Activated T-helper 1 cell treated with anti-CD3 and anti-CD28 coated beads, Interleukin-12 subunit alpha, Interleukin-12 subunit beta, Interleukin-2, Interleukin-4 antibody, amounts not matched to agents 30 ng/mL and 10 ng/mL and 1 ng/mL, durations not matched to agents 14 hours and 24 hours and 36 hours (primary cell): ENCODE measurements at regions of chr1 and their contacts with region 1.

Region 1: DNA sequence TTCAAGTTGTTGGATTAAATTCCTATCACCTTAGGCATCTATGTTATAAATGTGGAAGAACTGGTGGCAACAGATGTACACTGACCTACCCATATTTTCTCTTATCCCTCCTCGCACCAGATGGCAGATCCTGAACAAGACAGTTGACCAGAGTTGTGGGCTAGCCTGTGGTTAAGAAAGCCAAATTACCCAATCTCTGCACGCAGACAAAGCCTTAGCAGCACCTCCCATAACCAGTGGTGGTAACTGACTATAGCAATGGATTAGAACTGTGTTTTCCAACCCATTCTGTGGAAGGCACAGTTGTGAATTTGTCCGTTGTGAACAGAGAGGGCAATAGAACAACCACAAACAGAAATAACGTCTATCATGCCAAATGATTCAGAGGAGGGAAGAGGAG is 20.6 kb downstream of the ABCB10 start:
- DNase-seq: no peak
- H3K4me3 Mint-ChIP-seq: no peak overlapping the region
- H3K27ac Mint-ChIP-seq: no peak overlapping the region
- H3K4me1 Mint-ChIP-seq: peaks cover 26% of the 10 kb centered on the region
- H3K27me3 Mint-ChIP-seq: peaks cover 2% of the 10 kb centered on the region

Region 2: GRCh38 chr1:229287267-229287666 is 250.6 kb before region 1 on chr1:
- intact Hi-C with region 1: loop called (anchors 1 kb)
- DNase-seq: no peak
- H3K4me3 Mint-ChIP-seq: no peak overlapping the region
- H3K27ac Mint-ChIP-seq: no peak overlapping the region
- H3K4me1 Mint-ChIP-seq: peaks cover 36% of the 10 kb centered on the region
- H3K27me3 Mint-ChIP-seq: no peaks in the 10 kb centered on the region

Region 3: DNA sequence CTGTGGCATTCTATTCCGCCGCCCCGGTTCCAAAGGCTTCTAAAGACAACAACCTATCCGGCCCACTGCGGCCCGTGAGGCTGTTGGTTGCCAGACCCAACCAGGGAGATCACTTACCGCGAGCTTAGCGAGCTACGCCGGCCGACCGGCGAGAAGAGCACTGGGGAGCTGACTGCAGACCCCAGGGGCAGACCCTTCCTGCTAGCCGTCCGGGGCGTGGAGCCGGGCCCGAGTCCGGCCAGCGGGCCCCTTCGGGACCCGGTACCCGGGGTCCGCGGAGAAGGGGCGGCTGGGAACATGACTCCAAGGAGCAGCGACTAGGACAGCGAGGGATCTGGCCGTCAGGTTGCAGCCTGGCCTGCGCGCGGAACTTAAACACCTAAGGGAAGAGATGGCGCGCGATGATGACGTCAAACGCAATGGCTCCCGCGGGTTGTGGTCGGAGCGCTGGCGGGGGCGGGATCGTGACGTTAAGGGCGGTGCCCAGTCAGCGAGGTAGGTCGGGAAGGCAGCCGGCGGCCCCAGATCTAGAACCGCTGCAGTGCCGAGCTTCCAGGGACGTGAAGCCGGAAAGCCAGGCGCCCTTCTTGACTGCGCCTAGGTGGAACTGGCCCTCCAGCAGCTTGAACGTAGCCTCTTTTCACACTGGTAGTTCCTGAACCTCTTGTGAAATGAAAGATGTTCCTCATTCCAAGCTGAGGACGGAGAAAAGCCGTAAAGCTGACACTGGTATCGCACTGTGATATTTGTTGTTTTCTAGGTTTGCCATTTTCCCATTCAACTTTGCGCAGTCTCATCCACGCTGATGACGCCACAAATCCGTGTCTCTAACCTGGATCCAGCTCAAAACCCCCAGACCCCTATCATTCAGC is 29.7 kb before region 1 on chr1 and contains the start of gene NUP133:
- intact Hi-C with region 1: loop called (anchors 1 kb)
- DNase-seq: peak; percentile 97
- H3K4me3 Mint-ChIP-seq: peak within 1 kb of the TSS; percentile 96
- H3K27ac Mint-ChIP-seq: peak within 1 kb of the TSS; percentile 97
- H3K4me1 Mint-ChIP-seq: peaks cover 25% of the 10 kb centered on the region
- H3K27me3 Mint-ChIP-seq: peaks cover 4% of the 10 kb centered on the region
- total RNA-seq, gene NUP133: 47.9 and 49.1 TPM in 2 replicates

Region 4: DNA sequence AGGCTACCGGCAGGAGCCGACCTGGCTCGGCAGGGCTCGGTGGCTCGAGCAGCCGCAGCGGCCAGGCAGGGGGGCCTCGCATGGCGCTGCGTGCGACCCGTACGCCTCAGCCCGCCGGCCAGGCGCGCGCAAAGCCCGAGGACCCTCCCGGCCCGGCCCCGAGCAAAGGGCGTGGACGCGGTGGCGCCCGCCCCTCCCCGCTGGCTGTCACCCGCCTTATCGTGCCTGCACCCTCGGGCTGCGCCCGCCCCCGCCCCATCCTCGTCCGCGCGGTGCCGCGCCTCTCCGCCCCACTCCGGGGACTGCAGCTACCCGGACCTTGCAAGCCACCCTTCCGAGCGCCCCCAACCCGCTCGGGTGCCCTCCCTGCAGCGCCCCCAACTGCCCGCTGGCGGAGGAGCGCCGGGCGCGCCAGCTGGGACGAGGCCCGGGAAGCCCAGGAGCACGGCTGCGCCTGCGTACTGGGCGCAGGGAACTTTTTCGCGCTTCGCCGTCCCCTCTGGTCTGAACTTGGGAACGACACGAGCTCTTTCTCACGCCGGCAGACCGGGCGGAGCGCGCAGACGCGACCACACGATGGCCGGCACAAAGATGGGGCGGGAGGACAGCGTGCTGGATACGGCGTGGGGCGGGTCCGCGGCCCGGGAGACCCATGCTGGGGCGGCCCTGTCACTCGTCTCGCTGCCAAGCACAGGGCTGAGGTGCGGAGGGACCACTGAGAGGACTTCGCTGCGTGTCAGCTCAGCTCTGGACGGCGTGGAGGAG is 20.9 kb after region 1 on chr1 and contains the start of gene ABCB10:
- intact Hi-C with region 1: loop called (anchors 1 kb)
- DNase-seq: peak; percentile 81
- H3K4me3 Mint-ChIP-seq: peak within 1 kb of the TSS; percentile 90
- H3K27ac Mint-ChIP-seq: peak within 1 kb of the TSS; percentile 83
- H3K4me1 Mint-ChIP-seq: peaks cover 49% of the 10 kb centered on the region
- H3K27me3 Mint-ChIP-seq: no peaks in the 10 kb centered on the region
- total RNA-seq, gene ABCB10: 46.2 and 47.0 TPM in 2 replicates

Region 5: GRCh38 chr1:229856009-229856650 is 318.2 kb after region 1 on chr1:
- intact Hi-C with region 1: no loop called
- DNase-seq: peak; percentile 16
- H3K4me3 Mint-ChIP-seq: peak overlapping the region; percentile 58
- H3K27ac Mint-ChIP-seq: no peak overlapping the region
- H3K4me1 Mint-ChIP-seq: peaks cover 10% of the 10 kb centered on the region
- H3K27me3 Mint-ChIP-seq: peaks cover 9% of the 10 kb centered on the region